ENCODE measurements at regions of chr4 and their contacts with region 1.

Region 1: DNA sequence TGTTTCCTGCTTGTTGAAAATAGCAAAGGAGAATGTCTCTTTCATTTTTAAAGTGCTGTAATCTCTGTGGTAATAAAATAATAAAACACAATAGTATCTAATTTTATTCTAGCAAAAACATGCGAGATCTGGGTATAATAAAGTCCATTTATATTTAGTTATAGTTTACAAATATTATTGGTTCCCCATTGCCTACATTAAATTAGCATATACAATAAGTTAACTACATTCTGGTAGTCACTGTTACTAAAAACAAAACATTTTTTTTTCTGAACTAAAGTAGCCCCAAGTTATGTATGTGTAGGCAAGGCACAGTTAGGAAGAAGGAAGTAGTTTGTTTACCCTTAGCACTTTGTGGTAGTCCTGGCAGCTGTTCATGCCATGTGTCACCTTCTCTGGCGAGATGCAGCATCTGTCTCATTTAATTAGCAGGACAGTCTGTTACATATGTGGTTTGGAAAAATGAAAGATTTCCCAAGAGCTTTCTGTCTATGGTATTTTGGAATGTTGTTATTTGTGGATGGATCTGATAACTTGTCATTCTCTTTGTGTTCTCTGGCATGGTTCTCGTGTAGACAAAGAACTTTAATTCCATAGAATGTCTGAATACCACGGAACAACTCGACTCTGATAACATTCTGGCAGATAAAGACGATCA is 231.3 kb upstream of the PITX2 start:
- DNase-seq: no peak
- ATAC-seq: peak in 2 of 4 donors; percentile 32 to 45
- H3K4me3 ChIP-seq: no peak overlapping the region
- H3K27ac ChIP-seq: peak overlapping the region; percentile 42
- H3K4me1 ChIP-seq: peaks cover 19% of the 10 kb centered on the region
- H3K27me3 ChIP-seq: no peaks in the 10 kb centered on the region
- CTCF ChIP-seq: no peak

Region 2: GRCh38 chr4:110550260-110550659 is 303.9 kb before region 1 on chr4:
- intact Hi-C with region 1: no loop called
- DNase-seq: no peak
- ATAC-seq: peak; percentile 73 to 82 (median 78)
- H3K4me3 ChIP-seq: no peak overlapping the region
- H3K27ac ChIP-seq: peak overlapping the region; percentile 55
- H3K4me1 ChIP-seq: peaks cover 4% of the 10 kb centered on the region
- H3K27me3 ChIP-seq: no peaks in the 10 kb centered on the region
- CTCF ChIP-seq: no peak

Region 3: GRCh38 chr4:110622841-110623717 is 231.1 kb before region 1 on chr4 and contains the start of gene PITX2:
- intact Hi-C with region 1: loop called (anchors 2 to 5 kb)
- DNase-seq: peak; percentile 97
- ATAC-seq: peak; percentile 77 to 93 (median 87)
- H3K4me3 ChIP-seq: peak within 1 kb of the TSS; percentile 75
- H3K27ac ChIP-seq: peak within 1 kb of the TSS; percentile 99
- H3K4me1 ChIP-seq: peaks cover 10% of the 10 kb centered on the region
- H3K27me3 ChIP-seq: peaks cover 0 to 14% (median 0%) of the 10 kb centered on the region in 3 donors
- CTCF ChIP-seq: no peak
- total RNA-seq, gene PITX2: 15.7 to 57.9 (median 43.6) TPM

Region 4: DNA sequence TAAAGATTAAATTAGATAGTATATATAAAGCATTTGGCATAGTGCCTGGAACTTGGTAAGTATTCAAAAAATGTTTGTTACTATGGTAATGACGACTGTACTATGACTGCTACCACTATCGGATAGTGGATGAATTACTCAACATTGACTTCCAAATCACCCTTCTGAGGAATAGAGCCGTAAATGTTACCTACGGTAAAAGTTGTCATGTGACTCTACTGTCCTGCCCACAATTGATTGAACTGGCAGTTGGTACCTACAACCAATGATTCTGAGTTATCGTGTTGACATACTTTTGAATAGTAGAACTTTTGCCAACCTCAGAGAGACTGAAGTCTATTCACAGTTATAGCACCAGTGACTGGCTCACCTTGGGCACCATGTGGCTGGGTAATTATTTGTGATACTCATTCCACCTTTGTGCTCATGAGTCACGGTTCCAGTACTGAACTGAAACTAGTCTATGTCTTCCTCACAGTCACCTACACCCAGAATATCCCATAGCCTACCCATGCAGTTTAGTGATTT is 45.7 kb before region 1 on chr4:
- intact Hi-C with region 1: no loop called
- DNase-seq: no peak
- ATAC-seq: no peak
- H3K4me3 ChIP-seq: no peak overlapping the region
- H3K27ac ChIP-seq: no peak overlapping the region
- H3K4me1 ChIP-seq: no peaks in the 10 kb centered on the region
- H3K27me3 ChIP-seq: no peaks in the 10 kb centered on the region
- CTCF ChIP-seq: no peak

Measured in psoas muscle (tissue), 8 donors.